Activated B cell treated with CpG ODN at 0.5 μM for 24 hours (primary cell): ENCODE measurements at regions of chr7 and their contacts with region 1.

Region 1: GRCh38 chr7:18320971-18321567 is 174.5 kb upstream of the HDAC9 start:
- DNase-seq: no peak
- ATAC-seq: peak; percentile 92
- H3K4me3 Mint-ChIP-seq: no peak overlapping the region
- H3K27ac Mint-ChIP-seq: peak overlapping the region; percentile 47
- H3K4me1 Mint-ChIP-seq: peaks cover 42% of the 10 kb centered on the region
- H3K27me3 Mint-ChIP-seq: no peaks in the 10 kb centered on the region
- CTCF ChIP-seq: peak; percentile 39

Region 2: GRCh38 chr7:17462034-17462695 is 858.9 kb before region 1 on chr7:
- CTCF ChIA-PET with region 1: no interaction called
- POLR2A ChIA-PET with region 1: no interaction called
- intact Hi-C with region 1: no loop called
- DNase-seq: no peak
- ATAC-seq: no peak
- H3K4me3 Mint-ChIP-seq: no peak overlapping the region
- H3K27ac Mint-ChIP-seq: no peak overlapping the region
- H3K4me1 Mint-ChIP-seq: peaks cover 2% of the 10 kb centered on the region
- H3K27me3 Mint-ChIP-seq: peaks cover 4% of the 10 kb centered on the region
- CTCF ChIP-seq: no peak

Region 3: GRCh38 chr7:17769918-17770317 is 551.2 kb before region 1 on chr7:
- CTCF ChIA-PET with region 1: interaction called, 13 read pairs
- POLR2A ChIA-PET with region 1: no interaction called
- intact Hi-C with region 1: loop called (anchors 1 kb)
- DNase-seq: no peak
- ATAC-seq: peak; percentile 75
- H3K4me3 Mint-ChIP-seq: no peak overlapping the region
- H3K27ac Mint-ChIP-seq: no peak overlapping the region
- H3K4me1 Mint-ChIP-seq: peaks cover 11% of the 10 kb centered on the region
- H3K27me3 Mint-ChIP-seq: no peaks in the 10 kb centered on the region
- CTCF ChIP-seq: no peak

Region 4: DNA sequence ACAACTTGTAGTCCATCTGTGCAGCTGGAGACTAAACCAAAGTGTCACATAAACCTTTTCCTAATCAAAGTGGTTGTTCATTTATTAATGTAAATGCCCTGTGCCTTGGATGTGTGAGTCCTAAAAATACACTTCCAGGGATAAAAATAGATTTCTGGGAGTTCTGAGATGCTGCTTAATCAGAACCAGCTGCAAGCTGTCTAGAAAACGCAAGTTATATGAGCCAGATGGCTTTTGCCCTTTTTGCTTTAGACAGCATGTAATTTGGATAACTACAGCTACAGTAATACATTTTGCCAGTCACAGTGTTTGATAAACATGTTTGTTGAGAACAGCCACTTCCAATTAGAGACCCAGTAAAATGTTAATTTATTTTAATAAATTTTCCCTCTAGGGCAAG is 108.3 kb before region 1 on chr7:
- CTCF ChIA-PET with region 1: interaction called, 11 read pairs
- POLR2A ChIA-PET with region 1: no interaction called
- intact Hi-C with region 1: loop called (anchors 1 kb)
- DNase-seq: no peak
- ATAC-seq: no peak
- H3K4me3 Mint-ChIP-seq: no peak overlapping the region
- H3K27ac Mint-ChIP-seq: no peak overlapping the region
- H3K4me1 Mint-ChIP-seq: peaks cover 8% of the 10 kb centered on the region
- H3K27me3 Mint-ChIP-seq: no peaks in the 10 kb centered on the region
- CTCF ChIP-seq: no peak